ENCODE measurements at regions of chr6 and their contacts with region 1.

Region 1: DNA sequence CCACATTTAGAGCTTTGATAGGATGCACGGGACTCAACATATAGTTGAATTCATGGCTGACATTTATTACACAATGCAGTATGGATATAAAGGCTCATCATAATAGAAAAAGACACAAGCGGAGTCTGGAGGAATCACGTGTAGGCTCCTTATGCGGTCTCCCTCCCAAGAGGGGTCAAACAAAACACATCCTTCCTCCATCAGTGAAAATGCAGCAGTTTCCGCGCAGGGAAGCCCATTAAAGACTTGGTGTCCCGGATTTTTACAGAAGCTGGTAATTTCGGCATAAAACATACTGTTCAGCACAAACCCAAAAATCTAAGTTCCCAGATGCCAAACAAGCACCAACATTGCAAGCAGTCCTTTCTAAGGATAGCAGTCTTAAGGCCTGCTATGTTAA is 1.1 kb downstream of the USP45 start:
- DNase-seq: no peak
- H3K4me3 Mint-ChIP-seq: peak overlapping the region; percentile 93
- H3K27ac Mint-ChIP-seq: peak overlapping the region; percentile 87
- H3K4me1 Mint-ChIP-seq: peaks cover 28% of the 10 kb centered on the region
- H3K27me3 Mint-ChIP-seq: peaks cover 1% of the 10 kb centered on the region

Region 2: DNA sequence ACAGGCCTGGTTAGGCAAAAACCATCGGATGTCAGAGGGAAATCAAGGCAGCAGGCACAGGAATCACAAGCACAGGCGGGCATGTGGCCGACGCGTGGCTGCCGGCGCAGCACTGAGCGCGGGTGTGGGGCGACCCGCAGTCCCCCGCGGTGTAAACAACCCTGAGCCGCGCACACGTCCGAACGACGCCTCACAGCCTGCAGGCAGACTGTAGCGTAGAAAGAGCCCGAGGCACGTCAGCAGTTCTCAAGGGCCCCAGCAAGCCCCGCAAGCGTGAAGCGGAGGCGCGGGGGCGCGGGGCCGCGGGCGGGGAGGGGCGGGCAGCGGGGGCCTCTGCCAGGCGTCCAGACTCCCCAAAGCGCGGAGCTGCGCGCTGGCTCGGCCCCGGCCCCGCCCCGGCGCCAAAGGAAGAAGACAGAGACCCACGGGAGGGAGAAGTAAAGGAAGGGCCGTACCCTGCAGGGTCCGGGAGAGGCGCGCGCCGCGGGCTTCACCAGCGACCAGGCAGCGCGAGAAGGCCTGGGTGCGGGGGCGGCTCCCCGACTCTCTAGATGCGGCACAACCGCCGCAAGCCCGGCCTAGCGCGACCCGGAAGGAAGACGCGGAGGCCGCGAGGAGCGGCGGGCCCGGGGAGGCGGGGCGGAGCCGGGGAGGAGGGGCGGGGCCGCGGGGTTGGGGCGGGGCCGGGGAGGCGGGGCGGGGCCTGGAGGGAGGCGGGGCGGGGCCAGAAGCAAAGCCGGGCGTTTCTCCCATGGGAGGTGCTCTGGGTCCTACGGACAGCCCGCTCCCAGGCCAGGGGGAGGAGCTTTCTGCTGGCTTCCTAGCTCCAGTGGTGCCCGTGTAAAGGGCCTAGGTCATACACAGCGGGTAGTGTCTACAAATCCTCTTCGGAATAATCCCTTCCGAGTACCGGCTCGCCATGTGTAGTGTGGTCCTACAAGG is 566.5 kb before region 1 on chr6 and contains the start of gene FBXL4:
- CTCF ChIA-PET with region 1: no interaction called
- POLR2A ChIA-PET with region 1: no interaction called
- intact Hi-C with region 1: loop called (anchors 2 kb)
- DNase-seq: peak; percentile 88
- H3K4me3 Mint-ChIP-seq: peak within 1 kb of the TSS; percentile 93
- H3K27ac Mint-ChIP-seq: peak within 1 kb of the TSS; percentile 93
- H3K4me1 Mint-ChIP-seq: peaks cover 28% of the 10 kb centered on the region
- H3K27me3 Mint-ChIP-seq: no peaks in the 10 kb centered on the region
- total RNA-seq, gene FBXL4: 13.8 TPM

Region 3: GRCh38 chr6:99568103-99568933 is 54.2 kb after region 1 on chr6 and contains the start of gene CCNC:
- CTCF ChIA-PET with region 1: interaction called, 3 read pairs
- POLR2A ChIA-PET with region 1: interaction called, 10 read pairs
- intact Hi-C with region 1: loop called (anchors 1 kb)
- DNase-seq: peak; percentile 94
- H3K4me3 Mint-ChIP-seq: peak within 1 kb of the TSS; percentile 97
- H3K27ac Mint-ChIP-seq: peak within 1 kb of the TSS; percentile 94
- H3K4me1 Mint-ChIP-seq: peaks cover 25% of the 10 kb centered on the region
- H3K27me3 Mint-ChIP-seq: no peaks in the 10 kb centered on the region
- total RNA-seq, gene CCNC: 59.9 to 64.0 TPM

Region 4: DNA sequence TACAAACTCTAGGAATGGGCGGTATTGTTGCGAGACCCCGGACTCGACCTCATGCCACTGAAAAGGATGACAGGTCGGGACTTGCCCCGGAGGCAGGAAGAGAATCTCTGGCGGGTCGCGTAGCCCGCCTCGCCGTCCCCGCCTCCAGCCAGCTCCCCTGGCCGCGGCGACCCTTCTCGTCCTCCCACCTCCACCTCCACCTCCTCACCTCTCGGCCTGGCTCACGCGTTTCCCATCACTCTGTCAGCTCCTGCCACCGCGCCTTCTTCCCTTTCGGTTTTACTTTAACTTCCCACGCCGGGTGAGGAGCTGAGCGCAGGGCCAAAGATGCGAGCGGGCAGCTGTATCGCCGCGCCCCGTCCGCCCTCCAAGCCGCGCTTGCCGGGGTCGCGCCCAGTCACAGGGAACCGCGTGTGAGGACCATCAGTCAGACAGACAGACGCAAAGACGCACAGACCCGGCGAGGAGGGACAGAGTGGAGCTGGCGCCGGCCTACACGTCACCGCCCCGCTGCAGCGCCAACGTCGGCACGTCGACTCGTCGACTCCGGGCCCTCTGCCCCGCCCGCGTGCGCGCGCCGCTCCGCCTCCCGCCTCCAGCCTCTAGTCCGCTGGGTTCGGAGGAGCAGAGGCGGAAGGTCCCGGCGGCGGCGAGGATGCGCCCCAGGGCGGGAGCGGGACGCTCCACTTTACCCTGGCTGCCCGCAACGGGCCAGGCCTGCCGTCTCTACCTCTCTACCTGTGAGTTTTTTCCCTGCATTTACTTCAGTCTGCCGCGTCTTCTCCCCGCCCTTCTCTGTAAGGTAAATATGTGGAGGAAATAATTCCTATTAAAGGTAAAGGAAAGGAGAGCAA is 1367.0 kb after region 1 on chr6 and contains the start of gene ASCC3:
- CTCF ChIA-PET with region 1: no interaction called
- POLR2A ChIA-PET with region 1: no interaction called
- intact Hi-C with region 1: loop called (anchors 2 kb)
- DNase-seq: peak; percentile 95
- H3K4me3 Mint-ChIP-seq: peak within 1 kb of the TSS; percentile 100
- H3K27ac Mint-ChIP-seq: peak within 1 kb of the TSS; percentile 99
- H3K4me1 Mint-ChIP-seq: peaks cover 40% of the 10 kb centered on the region
- H3K27me3 Mint-ChIP-seq: peaks cover 3% of the 10 kb centered on the region
- total RNA-seq, gene ASCC3: 51.2 to 52.9 TPM

Measured in activated CD4-positive, alpha-beta memory T cell treated with anti-CD3 and anti-CD28 coated beads for 36 hours (primary cell).